Breast epithelium (tissue), 4 donors: ENCODE measurements at regions of chr10 and their contacts with region 1.

Region 1: GRCh38 chr10:4767033-4767814 is 58.8 kb upstream of the AKR1E2 start:
- DNase-seq: no peak
- H3K4me3 ChIP-seq: no peak overlapping the region
- H3K27ac ChIP-seq: no peak overlapping the region
- H3K4me1 ChIP-seq: no peaks in the 10 kb centered on the region
- H3K27me3 ChIP-seq: no peaks in the 10 kb centered on the region
- CTCF ChIP-seq: peak; percentile 24 to 74 (median 71)
- POLR2A ChIP-seq: no peak

Region 2: GRCh38 chr10:4656576-4657182 is 110.5 kb before region 1 on chr10:
- intact Hi-C with region 1: loop called (anchors 10 kb)
- DNase-seq: peak in 1 of 2 donors; percentile 46
- H3K4me3 ChIP-seq: no peak overlapping the region
- H3K27ac ChIP-seq: no peak overlapping the region
- H3K4me1 ChIP-seq: no peaks in the 10 kb centered on the region
- H3K27me3 ChIP-seq: no peaks in the 10 kb centered on the region
- CTCF ChIP-seq: peak; percentile 84 to 96 (median 86)
- POLR2A ChIP-seq: no peak

Region 3: DNA sequence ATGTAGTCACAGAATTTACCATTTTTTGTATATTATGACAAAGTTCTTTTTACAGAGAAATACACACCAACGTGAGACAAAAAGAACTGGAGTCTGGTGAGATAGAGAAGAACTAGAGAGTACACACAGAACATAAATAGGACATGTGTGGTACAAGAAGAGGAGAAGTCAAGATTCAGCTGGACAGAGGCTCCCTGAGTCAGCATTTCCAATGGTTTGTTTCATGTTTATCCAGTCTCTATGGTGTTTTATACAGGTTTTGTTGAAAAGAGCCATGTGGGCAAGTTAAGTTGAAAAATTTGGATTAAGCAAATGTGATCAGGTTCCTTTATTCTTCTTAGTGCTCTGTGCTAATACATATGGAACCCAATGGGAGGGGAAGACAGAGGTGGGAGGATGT is 46.8 kb before region 1 on chr10:
- intact Hi-C with region 1: no loop called
- DNase-seq: no peak
- H3K4me3 ChIP-seq: no peak overlapping the region
- H3K27ac ChIP-seq: no peak overlapping the region
- H3K4me1 ChIP-seq: no peaks in the 10 kb centered on the region
- H3K27me3 ChIP-seq: no peaks in the 10 kb centered on the region
- CTCF ChIP-seq: no peak
- POLR2A ChIP-seq: no peak